ENCODE measurements at regions of chr15 and their contacts with region 1.

Region 1: DNA sequence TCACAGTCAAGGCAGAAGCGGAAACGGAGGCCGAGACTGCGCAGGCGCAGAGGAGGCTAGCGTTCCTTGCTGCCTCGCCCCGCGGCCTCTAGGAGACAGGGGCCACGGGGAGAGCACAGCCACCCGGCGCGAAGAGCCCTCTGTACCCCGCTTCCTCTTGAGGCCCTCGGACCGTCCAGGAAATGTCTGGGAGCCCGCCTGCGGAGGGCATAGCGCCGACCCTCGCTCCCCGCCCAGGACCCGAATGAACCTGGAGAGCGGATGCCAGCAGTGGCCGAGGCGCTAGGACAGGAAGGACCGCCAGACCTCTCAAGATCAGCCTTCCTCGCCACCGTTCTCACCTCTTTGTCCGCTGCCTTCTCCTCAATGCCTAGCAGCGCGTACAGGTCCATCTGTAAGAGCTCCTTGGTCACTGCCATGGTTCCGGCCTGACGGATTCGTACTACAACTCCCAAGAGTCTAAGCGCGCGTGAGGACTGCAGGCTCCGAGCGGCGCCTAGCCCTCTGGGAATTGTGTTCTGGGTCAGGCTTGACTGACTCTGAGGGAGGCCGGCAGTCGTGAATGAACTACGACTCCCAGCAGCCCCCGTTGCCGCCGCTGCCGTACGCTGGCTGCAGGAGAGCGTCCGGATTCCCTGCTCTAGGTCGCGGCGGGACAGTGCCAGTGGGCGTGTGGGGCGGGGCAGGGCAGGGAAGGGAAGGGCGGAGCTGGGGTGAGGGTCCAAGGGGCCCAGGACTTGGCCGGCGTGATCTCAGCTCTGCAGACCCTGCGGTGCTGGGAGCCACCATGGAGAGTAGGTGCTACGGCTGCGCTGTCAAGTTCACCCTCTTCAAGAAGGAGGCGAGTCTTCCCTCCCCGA is at the starts of genes DNAJC17 and ZFYVE19:
- DNase-seq: peak; percentile 88 to 97
- ATAC-seq: peak; percentile 96 to 100 (median 98)
- H3K4me3 ChIP-seq: peak within 1 kb of the TSS; percentile 99
- H3K4me3 Mint-ChIP-seq: peak within 1 kb of the TSS; percentile 100
- H3K27ac ChIP-seq: peak within 1 kb of the TSS; percentile 95
- H3K27ac Mint-ChIP-seq: peak within 1 kb of the TSS; percentile 97 to 98
- H3K4me1 ChIP-seq: peaks cover 20% of the 10 kb centered on the region
- H3K4me1 Mint-ChIP-seq: peaks cover 19 to 21% of the 10 kb centered on the region in 2 donors
- H3K27me3 ChIP-seq: no peaks in the 10 kb centered on the region
- H3K27me3 Mint-ChIP-seq: no peaks in the 10 kb centered on the region
- CTCF ChIP-seq: no peak
- total RNA-seq, gene DNAJC17: 36.2 to 64.9 (median 50.0) TPM
- total RNA-seq, gene ZFYVE19: 16.4 to 19.7 (median 18.5) TPM

Region 2: DNA sequence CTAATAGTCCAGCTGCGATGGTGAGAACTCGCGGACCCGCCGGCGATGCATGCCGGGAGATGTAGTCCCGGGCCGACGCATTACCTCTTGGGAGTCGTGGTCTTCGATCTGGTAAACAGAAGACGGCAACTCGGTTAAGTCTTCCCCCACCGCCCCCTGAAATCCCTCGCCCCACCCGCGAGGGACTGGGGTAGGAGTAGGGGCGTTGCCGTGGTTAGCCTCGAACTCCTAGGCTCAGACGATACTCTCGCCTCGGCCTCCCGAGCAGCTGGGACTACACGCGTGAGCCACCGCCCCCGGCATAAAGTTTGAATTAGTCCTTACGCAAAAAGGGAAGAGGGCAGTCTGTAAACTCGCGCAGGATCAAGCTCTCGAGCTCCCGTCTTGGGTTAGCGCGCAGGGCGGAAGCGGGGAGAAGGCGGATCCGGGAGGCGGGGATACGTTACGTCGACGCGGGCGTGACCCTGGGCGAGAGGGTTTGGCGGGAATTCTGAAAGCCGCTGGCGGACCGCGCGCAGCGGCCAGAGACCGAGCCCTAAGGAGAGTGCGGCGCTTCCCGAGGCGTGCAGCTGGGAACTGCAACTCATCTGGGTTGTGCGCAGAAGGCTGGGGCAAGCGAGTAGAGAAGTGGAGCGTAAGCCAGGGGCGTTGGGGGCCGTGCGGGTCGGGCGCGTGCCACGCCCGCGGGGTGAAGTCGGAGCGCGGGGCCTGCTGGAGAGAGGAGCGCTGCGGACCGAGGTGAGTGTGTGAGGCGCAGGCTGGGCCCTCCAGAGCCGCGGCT is 112.4 kb before region 1 on chr15 and contains the start of gene RAD51:
- intact Hi-C with region 1: loop called (anchors 1 kb)
- DNase-seq: peak; percentile 88 to 96
- ATAC-seq: peak; percentile 91 to 98 (median 92)
- H3K4me3 ChIP-seq: peak within 1 kb of the TSS; percentile 92
- H3K4me3 Mint-ChIP-seq: peak within 1 kb of the TSS; percentile 100
- H3K27ac ChIP-seq: peak within 1 kb of the TSS; percentile 97
- H3K27ac Mint-ChIP-seq: peak within 1 kb of the TSS; percentile 97 to 98
- H3K4me1 ChIP-seq: peaks cover 19% of the 10 kb centered on the region
- H3K4me1 Mint-ChIP-seq: peaks cover 20 to 23% of the 10 kb centered on the region in 2 donors
- H3K27me3 ChIP-seq: no peaks in the 10 kb centered on the region
- H3K27me3 Mint-ChIP-seq: no peaks in the 10 kb centered on the region
- CTCF ChIP-seq: no peak
- total RNA-seq, gene RAD51: 1.2 to 5.0 (median 4.0) TPM

Region 3: GRCh38 chr15:40763801-40764732 is 43.2 kb before region 1 on chr15 and contains the start of gene GCHFR:
- intact Hi-C with region 1: loop called (anchors 1 kb)
- DNase-seq: peak; percentile 54 to 81
- ATAC-seq: peak; percentile 53 to 58 (median 58)
- H3K4me3 ChIP-seq: peak within 1 kb of the TSS; percentile 74
- H3K4me3 Mint-ChIP-seq: peak within 1 kb of the TSS; percentile 85
- H3K27ac ChIP-seq: peak within 1 kb of the TSS; percentile 71
- H3K27ac Mint-ChIP-seq: peak within 1 kb of the TSS; percentile 87 to 91
- H3K4me1 ChIP-seq: peaks cover 53% of the 10 kb centered on the region
- H3K4me1 Mint-ChIP-seq: peaks cover 28 to 50% of the 10 kb centered on the region in 2 donors
- H3K27me3 ChIP-seq: no peaks in the 10 kb centered on the region
- H3K27me3 Mint-ChIP-seq: no peaks in the 10 kb centered on the region
- CTCF ChIP-seq: peak; percentile 11
- total RNA-seq, gene GCHFR: 17.5 to 25.9 (median 25.9) TPM